HEK293T (cell line): ENCODE measurements at regions of chr6 and their contacts with region 1.

Region 1: DNA sequence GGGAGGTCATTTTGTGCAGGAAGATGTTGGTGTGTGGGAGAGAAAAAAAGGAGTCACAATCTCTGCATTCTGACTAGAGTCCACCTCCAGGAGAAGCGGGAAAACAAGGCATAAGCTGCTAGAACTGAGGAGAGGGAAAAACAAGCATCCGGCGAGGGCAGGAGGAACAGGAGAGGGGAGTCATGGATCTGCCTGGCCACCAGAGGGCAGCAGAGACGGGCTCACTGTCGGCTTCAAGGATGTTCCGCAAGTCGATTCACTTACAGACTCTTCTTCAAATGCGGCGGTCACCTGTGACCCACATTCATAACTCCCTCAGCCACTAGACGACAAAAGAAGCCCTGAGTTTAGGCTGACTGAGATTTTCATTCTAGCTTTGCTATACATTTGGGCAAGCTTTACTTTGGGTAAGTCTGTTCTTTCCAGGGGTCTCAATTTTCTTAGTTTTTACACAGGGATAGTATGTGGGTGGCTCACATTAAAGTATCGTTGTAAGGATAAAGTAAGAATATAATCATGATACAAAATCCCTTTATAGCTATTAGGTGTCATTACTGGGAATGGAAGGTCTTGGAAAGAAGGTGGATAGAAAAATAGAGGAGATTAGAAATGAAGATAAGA is 6.6 kb upstream of the BTNL2 start:
- DNase-seq: peak; percentile 77

Region 2: DNA sequence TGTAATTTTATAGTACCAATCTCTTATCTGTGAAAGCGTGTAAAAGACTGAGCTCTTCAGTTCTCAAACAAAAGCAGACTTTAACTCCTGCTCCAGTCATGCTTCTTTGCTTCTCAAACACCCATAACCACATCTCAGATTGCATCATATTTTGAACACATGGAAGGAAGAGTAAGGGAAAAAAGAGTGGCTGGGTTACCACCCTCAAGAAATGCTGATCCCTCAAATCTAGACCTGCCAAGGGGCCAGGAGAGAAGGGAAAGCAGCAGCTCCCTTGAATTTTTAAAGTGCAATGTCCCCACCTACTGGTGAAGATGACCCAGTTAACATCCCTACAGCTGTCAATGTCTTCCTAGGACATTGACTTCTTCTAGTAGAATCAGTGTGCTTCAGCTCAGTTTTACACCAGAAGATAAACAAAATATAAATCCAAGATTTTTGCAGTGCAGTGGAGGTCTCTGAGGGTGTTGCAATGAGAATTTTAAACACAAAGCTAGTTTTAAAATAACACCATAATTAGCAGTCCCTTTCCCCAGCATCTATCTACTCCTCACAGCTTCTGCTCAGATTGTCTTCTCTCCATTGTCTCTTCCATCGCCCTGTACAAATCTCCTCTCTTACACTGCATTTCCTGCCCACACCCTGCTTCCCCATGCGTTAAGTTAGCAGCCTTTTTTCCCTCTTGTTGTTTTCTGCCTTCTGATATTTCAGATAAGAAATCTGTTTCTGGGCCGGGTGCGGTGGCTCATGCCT is 372.4 kb after region 1 on chr6:
- CTCF ChIA-PET with region 1: interaction called, 14 read pairs
- POLR2A ChIA-PET with region 1: no interaction called
- DNase-seq: peak; percentile 70

Region 3: GRCh38 chr6:33192671-33193602 is 779.4 kb after region 1 on chr6:
- CTCF ChIA-PET with region 1: no interaction called
- POLR2A ChIA-PET with region 1: no interaction called
- DNase-seq: no peak